Aorta (tissue), 5 donors: ENCODE measurements at regions of chr21 and their contacts with region 1.

Region 1: DNA sequence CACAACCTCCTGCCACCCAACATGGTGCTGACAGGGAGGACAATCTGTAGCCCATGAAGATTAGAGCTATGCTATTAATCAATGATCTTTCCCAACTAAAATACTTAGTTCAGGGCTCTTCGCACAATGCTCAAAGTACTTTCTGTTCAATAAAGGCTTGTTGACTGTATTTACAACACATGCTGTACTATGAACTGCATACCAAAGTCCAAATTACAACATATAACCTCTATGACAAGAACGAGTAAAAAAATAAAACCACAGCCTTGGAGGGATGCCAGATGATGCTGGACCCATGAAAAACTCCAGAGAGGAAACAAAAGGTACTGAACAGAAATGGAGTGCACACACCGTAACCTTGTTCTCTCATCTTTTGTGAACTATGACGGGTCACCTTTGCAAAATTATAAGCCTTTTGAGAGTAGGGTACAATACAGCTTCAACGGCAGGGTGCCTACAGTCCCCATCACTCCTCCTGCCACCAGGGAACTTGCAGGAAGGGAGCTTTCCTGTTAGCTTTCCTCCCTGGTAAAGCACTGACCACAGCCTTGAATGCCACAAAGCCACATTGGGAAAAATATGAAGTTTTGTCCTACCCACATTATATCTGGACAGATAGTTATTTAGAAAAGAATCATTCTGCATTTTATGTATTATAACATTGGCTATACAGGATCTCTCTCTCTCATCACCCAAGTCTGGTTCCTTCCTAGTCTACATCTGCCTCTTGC is 175.6 kb downstream of the NRIP1 start:
- DNase-seq: no peak
- ATAC-seq: no peak
- H3K4me3 ChIP-seq: no peak overlapping the region
- H3K27ac ChIP-seq: no peak overlapping the region
- H3K4me1 ChIP-seq: no peaks in the 10 kb centered on the region
- H3K27me3 ChIP-seq: no peaks in the 10 kb centered on the region

Region 2: DNA sequence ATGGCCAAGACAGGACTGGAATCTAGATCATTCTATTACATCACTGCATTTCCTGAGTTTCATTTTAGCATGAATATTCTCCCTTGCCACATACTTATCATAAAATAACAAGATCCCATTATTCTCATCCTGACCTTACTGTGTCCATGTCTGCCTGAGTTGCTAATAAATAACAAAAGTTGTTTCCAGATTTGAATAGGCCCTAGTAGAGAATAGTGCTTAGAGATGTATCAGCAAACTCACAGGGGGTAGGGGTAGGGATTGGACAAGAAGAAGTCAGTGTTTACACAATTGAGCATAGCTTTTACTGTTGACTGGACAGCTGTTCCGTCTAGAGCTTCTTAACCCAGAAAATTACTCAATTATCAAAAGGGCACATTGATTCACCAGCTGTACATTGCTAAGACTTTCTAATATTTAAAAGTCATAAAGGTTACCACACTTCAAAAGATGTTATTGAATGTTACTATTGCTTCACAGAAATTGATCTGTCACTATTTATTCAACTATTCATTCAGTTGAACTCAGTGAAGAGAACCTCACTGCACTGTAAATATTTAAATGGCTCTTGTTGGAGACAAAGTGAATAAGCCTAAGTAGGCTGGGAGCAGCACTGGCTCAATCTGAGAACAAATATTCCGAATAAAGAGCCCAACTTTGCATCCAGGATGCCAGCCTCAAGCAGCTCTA is 53.7 kb after region 1 on chr21:
- intact Hi-C with region 1: loop called in 1 of 2 experiments (anchors 10 kb)
- DNase-seq: no peak
- ATAC-seq: no peak
- H3K4me3 ChIP-seq: no peak overlapping the region
- H3K27ac ChIP-seq: no peak overlapping the region
- H3K4me1 ChIP-seq: no peaks in the 10 kb centered on the region
- H3K27me3 ChIP-seq: peaks cover 0 to 2% of the 10 kb centered on the region in 2 donors

Region 3: DNA sequence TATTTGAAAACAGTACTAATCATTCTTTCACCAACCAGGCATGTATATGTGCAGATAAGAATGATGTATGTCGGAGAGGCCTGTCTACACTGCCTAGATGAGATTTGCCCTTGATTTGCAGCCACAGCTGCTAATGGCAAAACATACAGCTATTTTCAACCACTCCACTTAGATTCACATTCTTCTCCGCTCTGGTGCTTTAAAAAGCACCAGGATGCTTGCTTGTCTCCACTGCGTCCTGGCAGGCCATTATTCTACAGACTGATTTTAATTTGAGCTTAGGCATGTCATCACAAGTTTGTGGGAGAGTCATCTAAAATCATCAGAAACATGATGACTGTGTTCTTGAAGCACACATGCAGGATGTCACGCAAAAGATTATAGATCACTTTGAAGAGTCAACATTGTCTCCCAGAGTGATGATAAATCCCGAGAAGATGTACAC is 294.6 kb after region 1 on chr21:
- intact Hi-C with region 1: no loop called
- DNase-seq: no peak
- ATAC-seq: no peak
- H3K4me3 ChIP-seq: no peak overlapping the region
- H3K27ac ChIP-seq: no peak overlapping the region
- H3K4me1 ChIP-seq: no peaks in the 10 kb centered on the region
- H3K27me3 ChIP-seq: peaks cover 0 to 2% of the 10 kb centered on the region in 2 donors